PC-9 (cell line): ENCODE measurements at regions of chr18 and their contacts with region 1.

Region 1: GRCh38 chr18:74196220-74197119 is 48.1 kb downstream of the TIMM21 start:
- DNase-seq: peak; percentile 37 to 63
- H3K4me3 ChIP-seq: peak overlapping the region; percentile 55; the same call in 1 of the 2 replicates
- H3K27ac ChIP-seq: no peak overlapping the region; the same call in 1 of the 2 replicates
- H3K4me1 ChIP-seq: no peaks in the 10 kb centered on the region; the same call in 1 of the 2 replicates
- H3K27me3 ChIP-seq: no peaks in the 10 kb centered on the region
- CTCF ChIP-seq: peak; percentile 99

Region 2: GRCh38 chr18:74229891-74230290 is 33.4 kb after region 1 on chr18:
- CTCF ChIA-PET with region 1: no interaction called
- POLR2A ChIA-PET with region 1: interaction called, 26 read pairs
- intact Hi-C with region 1: no loop called
- DNase-seq: no peak
- H3K4me3 ChIP-seq: no peak overlapping the region
- H3K27ac ChIP-seq: no peak overlapping the region
- H3K4me1 ChIP-seq: peaks cover 61% of the 10 kb centered on the region
- H3K27me3 ChIP-seq: no peaks in the 10 kb centered on the region
- CTCF ChIP-seq: no peak

Region 3: DNA sequence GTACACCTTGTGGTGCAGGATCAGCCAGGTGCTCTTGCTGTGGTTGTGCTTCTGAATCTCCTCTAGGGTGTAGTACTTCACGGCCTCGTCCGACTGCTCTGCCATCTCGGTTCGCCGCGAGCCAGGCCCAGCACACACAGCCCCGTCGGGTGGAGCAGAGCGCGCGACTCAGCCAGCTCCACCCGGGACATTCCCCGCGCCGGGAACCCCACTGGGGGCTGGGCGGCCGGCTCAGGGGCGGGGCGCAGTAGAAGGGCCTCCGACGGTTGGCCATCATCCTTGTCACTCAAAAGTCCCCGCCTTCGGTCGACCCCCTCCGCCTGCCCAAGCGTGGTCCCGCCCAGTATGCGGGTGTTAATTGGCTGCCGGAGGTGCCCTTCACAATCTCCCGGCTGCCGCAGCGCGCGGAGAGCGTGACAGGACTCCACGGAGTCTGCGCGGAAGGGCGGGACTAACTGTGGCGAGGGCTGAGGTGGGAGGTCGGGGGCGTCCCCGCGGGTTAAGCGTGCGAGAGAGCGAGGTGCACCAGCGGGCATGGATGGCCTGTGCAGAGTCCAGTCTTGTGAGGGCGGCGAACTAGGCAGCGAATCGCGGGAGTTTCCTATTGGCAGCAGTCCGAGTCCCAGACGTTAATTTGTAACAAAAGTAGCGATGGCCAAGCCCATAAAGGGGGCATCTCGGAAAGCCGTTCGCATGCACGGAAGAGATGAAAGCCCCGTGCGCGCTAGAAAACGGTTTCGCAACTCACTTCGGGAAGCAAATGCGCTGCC is 95.5 kb after region 1 on chr18 and contains the start of gene CYB5A:
- CTCF ChIA-PET with region 1: no interaction called
- POLR2A ChIA-PET with region 1: no interaction called
- intact Hi-C with region 1: loop called (anchors 1 kb)
- DNase-seq: peak; percentile 88 to 98
- H3K4me3 ChIP-seq: peak within 1 kb of the TSS; percentile 81
- H3K27ac ChIP-seq: 0 out of 2 replicates have a peak within 1 kb of the TSS, but pooled peaks have one; percentile 13
- H3K4me1 ChIP-seq: peaks cover 45% of the 10 kb centered on the region
- H3K27me3 ChIP-seq: no peaks in the 10 kb centered on the region
- CTCF ChIP-seq: peak; percentile 43; the same call in 1 of the 2 replicates
- total RNA-seq, gene CYB5A: 105 and 109 TPM in 2 replicates

Region 4: DNA sequence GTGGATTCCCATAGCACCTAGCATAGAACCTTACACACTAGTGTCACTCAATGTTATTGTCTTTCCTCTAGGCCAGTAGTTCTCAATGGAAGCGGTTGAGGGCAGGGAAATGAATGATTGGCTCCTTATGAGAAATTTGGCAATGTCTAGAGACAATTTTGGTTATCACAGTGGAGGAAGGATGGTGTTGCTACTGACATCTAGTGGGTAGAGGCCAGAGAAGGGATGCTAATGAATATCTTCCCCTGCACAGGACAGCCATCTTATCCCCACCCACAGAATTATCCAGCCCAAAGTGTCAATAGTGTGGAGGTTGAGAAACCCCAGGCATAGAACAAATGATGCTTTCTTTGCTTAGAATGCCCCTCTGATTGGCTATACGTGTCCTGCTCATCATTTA is 134.9 kb after region 1 on chr18:
- CTCF ChIA-PET with region 1: no interaction called
- POLR2A ChIA-PET with region 1: no interaction called
- intact Hi-C with region 1: loop called (anchors 1 kb)
- DNase-seq: peak in 1 of 2 experiments; percentile 46
- H3K4me3 ChIP-seq: no peak overlapping the region
- H3K27ac ChIP-seq: no peak overlapping the region
- H3K4me1 ChIP-seq: no peaks in the 10 kb centered on the region
- H3K27me3 ChIP-seq: no peaks in the 10 kb centered on the region
- CTCF ChIP-seq: peak; percentile 60

Region 5: DNA sequence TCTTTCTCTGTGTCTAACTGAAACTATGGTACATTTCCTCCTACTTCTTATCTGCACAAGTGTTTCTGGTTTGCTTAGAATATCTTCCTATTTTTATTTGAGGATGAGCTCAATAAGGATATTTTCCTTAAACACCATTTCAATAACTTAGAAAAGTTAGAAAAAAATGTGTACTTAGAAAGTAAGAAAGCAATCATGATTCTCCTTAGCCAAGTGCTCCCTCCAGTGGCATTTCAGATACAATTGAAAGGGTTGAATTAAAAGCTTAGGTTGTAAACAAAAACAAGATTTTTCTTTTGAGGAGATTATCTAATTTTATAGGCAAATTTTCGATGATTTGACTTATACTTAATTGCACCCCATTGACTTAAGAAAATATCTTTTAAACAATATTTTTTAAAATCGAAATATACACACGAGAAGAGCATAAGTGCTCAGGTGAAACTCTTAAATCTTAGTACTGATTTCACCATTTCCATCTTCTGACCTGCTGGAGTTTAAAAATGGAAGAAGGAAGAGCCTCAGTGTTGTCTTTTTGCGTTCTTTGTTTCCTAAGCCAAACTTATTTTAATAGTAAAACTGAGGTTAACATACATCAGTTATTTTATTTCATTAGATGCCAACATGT is 146.1 kb after region 1 on chr18:
- CTCF ChIA-PET with region 1: interaction called, 5 read pairs
- POLR2A ChIA-PET with region 1: no interaction called
- intact Hi-C with region 1: loop called (anchors 1 kb)
- DNase-seq: peak; percentile 12 to 58
- H3K4me3 ChIP-seq: no peak overlapping the region
- H3K27ac ChIP-seq: no peak overlapping the region
- H3K4me1 ChIP-seq: no peaks in the 10 kb centered on the region
- H3K27me3 ChIP-seq: no peaks in the 10 kb centered on the region
- CTCF ChIP-seq: peak; percentile 92

Region 6: DNA sequence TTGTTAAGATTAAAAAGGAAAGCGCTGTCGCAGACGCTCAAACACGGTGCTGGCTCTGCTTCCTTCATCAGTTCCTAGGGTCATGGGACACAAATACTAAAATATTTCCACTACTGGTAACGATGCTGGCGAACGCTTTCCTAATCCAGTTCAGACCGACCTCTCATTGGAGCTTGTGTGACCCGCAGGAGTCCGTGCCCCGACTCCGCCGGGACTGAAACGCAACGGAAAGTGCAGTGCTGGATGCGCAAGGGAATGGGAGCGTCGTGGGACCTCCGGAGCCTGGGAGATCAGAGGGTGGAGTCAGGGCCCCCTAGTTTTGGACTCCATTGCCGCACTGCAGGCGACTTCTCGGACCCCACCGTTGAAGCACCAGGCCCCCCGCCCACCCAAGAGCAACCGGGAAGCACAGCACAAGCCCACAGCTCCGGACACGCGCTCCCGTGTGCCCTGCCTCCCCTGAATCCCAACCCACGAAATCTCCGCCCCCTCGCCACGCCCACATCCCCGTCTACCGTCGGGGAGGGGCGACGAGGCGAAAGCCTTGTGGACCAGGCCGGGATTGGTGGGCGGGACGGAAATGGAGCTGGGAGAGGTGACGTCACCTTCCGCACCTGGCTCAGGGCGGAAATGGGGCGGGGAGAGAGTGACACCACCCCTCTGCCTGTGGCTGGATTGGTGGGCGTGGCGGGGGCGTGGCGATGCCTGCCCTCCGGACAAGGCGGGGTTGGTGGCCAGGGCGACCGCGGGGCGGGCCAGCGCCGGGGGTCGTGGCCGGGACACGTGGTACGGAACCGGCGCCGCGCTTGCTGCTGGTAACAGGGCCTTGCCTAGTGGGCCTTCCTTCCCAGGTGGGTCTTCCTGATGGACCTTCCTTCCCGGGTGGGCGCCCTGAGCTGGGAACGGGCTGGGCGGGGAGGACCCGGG is 299.4 kb after region 1 on chr18 and contains the start of gene CNDP2:
- CTCF ChIA-PET with region 1: no interaction called
- POLR2A ChIA-PET with region 1: no interaction called
- intact Hi-C with region 1: loop called (anchors 5 kb)
- DNase-seq: peak; percentile 96 to 99
- H3K4me3 ChIP-seq: peak within 1 kb of the TSS; percentile 76
- H3K27ac ChIP-seq: peak within 1 kb of the TSS; percentile 58
- H3K4me1 ChIP-seq: peaks cover 8% of the 10 kb centered on the region
- H3K27me3 ChIP-seq: peaks cover 21% of the 10 kb centered on the region
- CTCF ChIP-seq: no peak
- total RNA-seq, gene CNDP2: 161 and 183 TPM in 2 replicates

Region 7: DNA sequence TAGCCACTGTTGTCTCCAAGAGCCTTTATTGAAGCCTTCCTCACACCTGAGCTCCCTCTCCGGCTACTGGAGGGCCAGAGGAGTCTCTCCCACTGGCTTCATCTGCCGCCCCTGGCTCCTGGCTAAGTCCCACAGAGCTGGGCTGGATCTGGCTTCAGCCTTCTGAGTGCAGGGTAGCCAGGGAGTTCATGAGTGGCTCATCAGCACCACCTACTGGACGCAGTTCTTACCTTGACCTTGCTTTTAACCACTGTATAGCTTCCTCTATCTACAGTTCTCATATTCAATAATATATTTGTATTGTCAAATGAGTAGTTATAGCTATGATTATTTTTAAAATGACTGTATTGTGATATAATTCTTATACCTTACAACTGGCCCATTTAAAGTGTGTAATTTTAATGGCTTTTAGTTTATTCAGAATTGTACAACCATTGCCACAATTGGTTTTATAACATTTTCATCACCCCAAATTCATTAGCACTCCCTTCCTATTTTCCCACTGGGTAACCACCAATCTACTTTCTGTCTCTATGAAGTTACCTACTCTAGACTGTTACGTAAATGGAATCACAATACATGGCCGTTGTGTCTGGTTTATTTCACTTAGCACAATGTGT is 355.6 kb after region 1 on chr18:
- CTCF ChIA-PET with region 1: interaction called, 3 read pairs
- POLR2A ChIA-PET with region 1: no interaction called
- intact Hi-C with region 1: loop called (anchors 1 kb)
- DNase-seq: peak; percentile 56 to 62
- H3K4me3 ChIP-seq: no peak overlapping the region
- H3K27ac ChIP-seq: no peak overlapping the region
- H3K4me1 ChIP-seq: 0 out of 2 replicates have a peak, but pooled peaks cover 2% of the 10 kb centered on the region
- H3K27me3 ChIP-seq: peaks cover 54% of the 10 kb centered on the region
- CTCF ChIP-seq: peak; percentile 95